ENCODE measurements at regions of chr12 and their contacts with region 1.

Region 1: DNA sequence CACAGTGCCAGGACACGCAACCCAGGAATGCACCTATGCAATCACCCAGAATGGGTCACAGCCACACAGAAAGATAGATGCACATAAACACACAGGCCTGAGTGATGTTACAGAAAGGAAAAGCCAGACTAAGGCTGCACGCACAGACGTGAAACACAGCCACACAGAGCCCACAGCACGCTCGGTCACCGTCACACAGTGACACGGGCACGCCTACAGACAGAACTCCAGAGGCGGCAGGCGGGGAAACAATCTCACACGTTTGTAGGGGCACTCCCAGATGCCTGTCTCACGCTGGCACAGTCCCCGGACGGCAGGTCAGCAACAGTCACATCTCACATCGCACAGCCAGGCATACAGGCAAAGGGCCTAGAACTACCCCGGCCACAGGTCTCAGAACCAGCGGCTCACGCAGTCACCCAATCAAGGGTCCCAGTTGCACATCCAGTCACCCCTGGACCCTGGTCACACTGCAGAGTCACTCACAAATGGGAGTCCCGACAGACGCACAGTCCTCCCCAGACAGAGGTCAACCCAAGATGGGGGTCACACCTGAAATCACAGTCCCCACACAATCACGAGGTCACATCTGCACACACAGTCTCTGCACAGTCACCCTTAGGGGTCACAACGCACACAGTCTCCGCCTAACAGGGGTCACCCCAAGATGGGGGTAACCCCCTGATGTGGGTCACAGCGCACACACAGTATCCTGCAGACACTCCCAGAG is 790 bp downstream of the SSH1 start:
- DNase-seq: peak; percentile 93

Region 2: DNA sequence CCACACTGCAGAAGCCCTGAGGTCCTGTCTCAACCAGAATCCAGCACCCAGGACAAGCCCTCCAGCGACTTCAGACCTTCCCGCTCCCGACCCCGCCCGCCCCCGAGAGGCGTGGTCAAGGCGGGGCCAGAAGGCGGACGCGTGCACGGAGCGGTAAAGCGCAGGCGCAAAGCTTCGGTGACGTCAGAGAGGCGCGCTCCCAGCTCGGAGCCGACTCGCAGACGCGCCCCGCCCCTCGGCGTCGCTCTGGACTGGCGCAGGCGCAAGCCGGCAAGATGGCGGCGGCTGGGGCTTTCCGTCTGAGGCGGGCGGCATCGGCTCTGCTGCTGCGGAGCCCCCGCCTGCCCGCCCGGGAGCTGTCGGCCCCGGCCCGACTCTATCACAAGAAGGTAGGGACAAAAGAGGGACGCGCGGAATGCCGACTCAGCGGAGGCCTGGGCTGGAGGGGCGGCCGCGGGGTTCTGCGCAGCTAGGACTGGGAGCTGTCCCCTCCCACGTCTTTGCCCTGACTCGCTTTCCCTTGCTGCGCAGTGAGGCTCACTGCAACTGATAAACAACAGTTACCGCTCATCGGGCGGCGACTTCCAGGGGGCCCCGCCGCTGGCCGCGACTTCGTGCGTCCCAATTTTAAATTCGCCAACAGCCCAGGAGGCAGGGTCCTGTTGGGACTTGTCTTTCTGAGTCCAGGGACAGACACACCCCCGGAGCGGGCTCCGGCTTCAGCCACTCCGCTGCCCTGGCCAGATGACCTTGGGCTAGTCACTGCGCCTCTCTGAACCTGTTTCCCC is 294.1 kb before region 1 on chr12 and contains the start of gene ISCU:
- intact Hi-C with region 1: loop called (anchors 5 kb)
- DNase-seq: peak; percentile 99
- total RNA-seq, gene ISCU: 432 TPM

Region 3: DNA sequence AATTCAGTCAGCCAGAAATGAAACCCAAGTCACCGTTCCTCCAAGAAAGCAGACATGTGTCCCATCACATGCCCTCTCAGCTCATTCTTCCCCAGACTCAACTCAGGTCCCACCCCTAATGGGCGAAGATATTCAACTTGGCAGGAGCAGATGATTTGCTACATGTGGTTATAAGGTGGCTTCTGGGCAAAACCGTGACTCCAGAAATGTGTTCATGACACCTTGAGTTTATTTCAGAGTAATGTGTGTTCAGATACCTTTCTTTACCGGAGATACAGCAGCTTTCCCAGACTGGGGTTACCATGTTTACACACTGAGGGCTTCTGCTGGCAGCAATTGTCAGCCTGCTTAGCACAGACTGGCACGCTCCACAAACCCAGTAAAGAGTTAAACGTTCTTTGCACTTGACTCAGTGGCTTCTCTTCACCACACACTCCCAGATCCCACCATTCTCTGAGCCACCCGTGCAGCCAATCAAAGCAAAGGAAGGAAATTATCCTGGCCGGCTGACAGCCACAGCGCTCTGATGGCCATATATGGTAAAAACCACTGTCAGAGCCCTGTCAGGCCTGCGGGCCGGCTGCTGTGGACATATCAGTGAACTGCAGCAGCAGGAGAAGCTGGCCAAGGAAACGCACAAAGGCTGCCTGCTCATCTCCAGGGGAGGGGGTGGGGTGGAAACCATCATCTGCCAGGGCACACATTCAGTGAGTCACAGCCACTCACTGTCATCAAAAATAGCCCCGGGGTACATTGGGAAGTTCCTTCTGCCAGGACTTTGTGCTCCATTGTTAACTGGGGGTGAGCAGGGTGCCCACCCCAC is 165.2 kb before region 1 on chr12:
- intact Hi-C with region 1: loop called (anchors 10 kb)
- DNase-seq: peak; percentile 96

Region 4: DNA sequence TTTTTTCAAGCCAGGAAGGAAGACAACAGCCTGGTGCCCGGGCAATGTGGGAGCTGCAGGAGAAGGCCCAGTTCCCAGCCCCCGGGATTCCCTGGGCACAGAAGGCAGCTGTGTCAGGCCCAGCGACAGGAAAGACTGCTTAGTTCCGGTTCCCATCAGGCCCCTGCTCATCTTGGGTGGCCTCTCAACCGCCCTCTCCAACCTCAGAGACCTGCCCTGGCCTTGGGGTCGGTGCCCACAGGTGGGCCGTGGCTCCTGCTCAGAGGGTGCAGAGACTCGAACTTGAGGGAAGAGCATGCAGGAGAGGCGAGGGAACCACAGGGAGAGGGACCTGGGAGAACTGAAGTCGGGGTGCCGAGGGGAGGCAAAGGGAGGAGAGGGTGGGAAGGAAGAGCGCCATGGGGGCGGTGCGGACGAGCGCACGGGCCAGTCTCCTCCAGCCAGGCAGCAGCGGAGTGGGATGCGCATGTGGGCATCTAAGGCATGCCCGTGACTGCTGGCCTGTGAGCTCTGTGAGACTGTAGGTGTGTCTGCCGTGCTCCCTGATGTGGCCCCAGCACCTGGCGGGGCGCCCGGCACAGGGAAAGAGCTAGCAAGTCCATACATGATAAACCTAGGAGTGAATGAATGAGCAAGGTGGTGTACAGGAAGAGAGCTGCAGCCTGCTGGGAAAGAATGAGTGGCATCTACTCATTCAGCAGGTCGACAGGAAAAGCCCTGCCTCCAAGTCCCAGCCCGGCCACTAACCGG is 42.0 kb before region 1 on chr12:
- intact Hi-C with region 1: no loop called
- DNase-seq: no peak

Region 5: DNA sequence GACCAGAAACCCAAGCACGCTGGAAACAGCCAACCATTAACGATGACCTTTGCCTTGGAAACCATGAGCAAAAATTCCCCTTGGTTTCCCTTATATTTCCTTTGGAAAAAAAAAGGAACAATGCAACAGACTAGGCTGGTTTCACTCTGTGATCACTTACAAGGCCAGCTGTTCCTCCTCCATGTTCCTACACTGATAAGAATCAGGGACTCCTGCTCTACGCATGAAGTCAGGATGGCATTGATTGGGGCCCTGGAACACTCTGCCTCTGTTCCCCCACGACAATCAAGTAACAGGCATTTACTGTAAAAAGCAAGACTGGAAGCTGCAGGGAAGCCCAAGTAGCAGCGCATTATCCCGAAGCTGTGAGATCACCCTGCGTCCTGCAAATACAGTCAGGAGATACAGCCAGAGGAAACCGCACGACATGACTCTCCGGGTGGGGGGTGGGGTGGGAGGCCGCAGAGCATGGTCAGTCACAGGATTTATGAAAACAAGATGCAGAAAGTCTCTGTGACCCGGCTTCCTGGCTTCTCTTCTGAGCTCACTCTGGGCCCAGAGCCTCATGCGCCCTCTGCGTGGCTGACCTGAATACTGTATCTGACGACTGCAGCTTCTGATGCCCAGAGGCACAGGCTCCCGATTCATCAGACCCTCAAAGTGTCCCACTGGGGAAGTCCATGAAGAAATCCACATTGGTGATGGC is 30.3 kb before region 1 on chr12:
- intact Hi-C with region 1: loop called (anchors 5 kb)
- DNase-seq: peak; percentile 87

Region 6: DNA sequence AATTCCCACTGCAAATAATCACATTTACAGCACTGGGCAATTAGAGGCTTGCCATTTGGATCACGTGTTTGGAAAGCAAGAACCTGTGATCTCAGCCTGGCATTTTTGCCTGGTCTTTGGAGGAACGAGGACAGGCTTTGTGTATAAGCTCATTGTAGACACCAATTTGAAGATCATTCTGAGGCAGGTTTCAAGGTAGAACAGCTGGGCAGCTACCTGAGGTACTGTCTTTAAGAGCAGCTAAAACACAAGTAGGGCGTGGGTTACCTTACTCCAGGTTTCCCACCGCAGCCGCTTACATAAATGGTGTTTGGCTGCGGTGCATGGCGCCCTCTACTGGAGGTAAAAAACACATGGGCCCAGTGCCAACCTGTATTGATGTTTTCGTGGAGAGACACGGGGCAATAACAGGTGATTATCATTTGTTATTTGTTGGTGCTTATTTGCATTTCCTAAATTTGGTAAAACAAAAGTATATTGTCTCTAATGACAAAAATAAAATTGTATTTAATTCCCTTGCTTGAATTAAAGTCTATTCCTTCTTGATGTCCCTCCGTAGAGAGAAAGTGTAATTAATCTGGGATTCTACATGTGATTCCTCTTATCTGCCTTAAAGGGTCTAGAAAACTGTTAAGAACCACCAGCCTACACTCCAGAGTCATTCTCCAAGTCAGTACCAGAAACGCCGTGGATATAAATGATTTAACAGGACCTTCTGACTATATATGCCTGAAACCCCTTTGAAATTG is 94.6 kb after region 1 on chr12:
- intact Hi-C with region 1: loop called (anchors 5 kb)
- DNase-seq: peak; percentile 83

Region 7: DNA sequence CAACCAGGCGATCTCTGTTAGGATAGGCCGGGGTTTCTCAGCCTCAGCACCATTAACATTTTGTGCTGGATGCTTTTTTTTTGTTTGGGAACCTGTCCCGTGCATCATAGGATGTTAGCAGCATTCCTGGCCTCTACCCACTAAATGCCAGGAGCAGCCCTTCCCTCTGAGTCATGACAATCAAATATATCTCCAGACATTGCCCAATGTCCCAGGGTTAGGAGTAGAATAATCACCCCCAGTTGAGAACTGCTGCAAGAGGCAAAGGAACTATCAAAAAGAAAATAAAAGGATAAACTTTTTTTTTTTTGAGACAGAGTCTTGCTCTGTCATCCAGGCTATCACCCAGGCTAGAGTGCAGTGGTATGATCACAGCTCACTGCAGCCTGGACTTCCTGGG is 335.8 kb after region 1 on chr12:
- intact Hi-C with region 1: no loop called
- DNase-seq: peak; percentile 12

Measured in cardiac septum (tissue), 1 donor.